KBM-7 (cell line): ENCODE measurements at regions of chr17 and their contacts with region 1.

Region 1: DNA sequence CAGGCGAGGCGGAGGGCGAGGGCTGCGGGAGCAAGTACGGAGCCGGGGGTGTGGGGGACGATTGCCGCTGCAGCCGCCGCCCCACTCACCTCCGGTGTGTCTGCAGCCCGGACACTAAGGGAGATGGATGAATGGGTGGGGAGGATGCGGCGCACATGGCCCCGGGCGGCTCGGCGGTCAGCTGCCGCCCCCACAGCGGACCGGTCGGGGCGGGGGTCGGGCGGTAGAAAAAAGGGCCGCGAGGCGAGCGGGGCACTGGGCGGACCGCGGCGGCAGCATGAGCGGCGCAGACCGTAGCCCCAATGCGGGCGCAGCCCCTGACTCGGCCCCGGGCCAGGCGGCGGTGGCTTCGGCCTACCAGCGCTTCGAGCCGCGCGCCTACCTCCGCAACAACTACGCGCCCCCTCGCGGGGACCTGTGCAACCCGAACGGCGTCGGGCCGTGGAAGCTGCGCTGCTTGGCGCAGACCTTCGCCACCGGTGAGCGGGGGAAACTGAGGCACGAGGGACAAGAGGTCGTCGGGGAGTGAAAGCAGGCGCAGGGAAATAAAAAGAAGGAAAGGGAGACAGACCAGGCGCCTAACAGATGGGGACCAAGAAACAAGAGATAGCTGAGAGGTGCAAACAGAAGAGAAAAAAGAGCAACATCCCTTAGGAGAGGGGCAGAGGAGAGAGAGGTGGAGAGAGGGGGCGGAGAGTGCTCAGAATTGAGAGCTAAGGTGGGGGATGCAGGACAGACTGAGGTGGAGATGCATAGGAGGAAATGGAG is at the start of gene PNMT:
- DNase-seq: peak; percentile 40

Region 2: GRCh38 chr17:39573447-39574298 is 94.7 kb before region 1 on chr17:
- in situ Hi-C with region 1: loop called (anchors 25 kb)
- DNase-seq: no peak

Region 3: GRCh38 chr17:39591958-39592954 is 76.1 kb before region 1 on chr17:
- in situ Hi-C with region 1: no loop called
- DNase-seq: peak; percentile 48